ENCODE measurements at regions of chr15 and their contacts with region 1.

Region 1: GRCh38 chr15:40357723-40358470 is at the start of gene DISP2:
- DNase-seq: peak; percentile 89 to 96 (median 96)
- ATAC-seq: peak; percentile 90
- H3K4me3 ChIP-seq: peak within 1 kb of the TSS; percentile 53
- H3K27ac ChIP-seq: peak within 1 kb of the TSS; percentile 4
- H3K4me1 ChIP-seq: no peaks in the 10 kb centered on the region
- H3K27me3 ChIP-seq: no peaks in the 10 kb centered on the region
- total RNA-seq, gene DISP2: 0.85 to 4.6 (median 0.97) TPM

Region 2: GRCh38 chr15:39807791-39808190 is 550.1 kb before region 1 on chr15:
- intact Hi-C with region 1: no loop called
- DNase-seq: no peak
- ATAC-seq: no peak
- H3K4me3 ChIP-seq: no peak overlapping the region
- H3K27ac ChIP-seq: no peak overlapping the region
- H3K4me1 ChIP-seq: no peaks in the 10 kb centered on the region
- H3K27me3 ChIP-seq: no peaks in the 10 kb centered on the region

Region 3: GRCh38 chr15:40323239-40323952 is 34.5 kb before region 1 on chr15 and contains the start of gene INAFM2:
- intact Hi-C with region 1: loop called in 1 of 4 experiments (anchors 5 kb)
- DNase-seq: peak; percentile 94 to 97 (median 97)
- ATAC-seq: peak; percentile 92
- H3K4me3 ChIP-seq: peak within 1 kb of the TSS; percentile 76
- H3K27ac ChIP-seq: peak within 1 kb of the TSS; percentile 92
- H3K4me1 ChIP-seq: peaks cover 11% of the 10 kb centered on the region
- H3K27me3 ChIP-seq: no peaks in the 10 kb centered on the region
- total RNA-seq, gene INAFM2: 72.6 to 115 (median 74.1) TPM

Measured in right cardiac atrium (tissue), 5 donors.